Caco-2 (cell line): ENCODE measurements at regions of chr15 and their contacts with region 1.

Region 1: DNA sequence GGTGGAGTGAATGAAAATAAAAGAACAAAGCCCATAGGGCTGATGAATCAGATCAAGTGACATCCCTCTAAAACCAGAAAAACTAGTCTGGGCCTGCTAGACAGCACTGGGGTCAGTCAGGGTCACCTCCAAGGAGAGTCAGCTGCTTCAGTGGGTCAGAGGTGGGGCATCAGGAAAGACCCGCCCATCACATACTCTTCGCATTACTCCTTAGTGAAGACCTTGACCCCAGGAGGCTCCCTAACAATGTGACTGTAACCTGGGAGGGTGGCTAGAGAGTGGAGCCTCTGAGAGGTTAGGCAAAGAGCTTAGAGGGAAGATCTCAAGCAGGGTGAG is 12.9 kb downstream of the PPCDC start:
- DNase-seq: peak; percentile 93 to 96
- H3K4me3 ChIP-seq: no peak overlapping the region
- H3K4me3 Mint-ChIP-seq: peak overlapping the region; percentile 25
- H3K27ac Mint-ChIP-seq: peak overlapping the region; percentile 75
- H3K4me1 ChIP-seq: peaks cover 66% of the 10 kb centered on the region
- H3K4me1 Mint-ChIP-seq: peaks cover 50% of the 10 kb centered on the region
- H3K27me3 ChIP-seq: no peaks in the 10 kb centered on the region
- H3K27me3 Mint-ChIP-seq: no peaks in the 10 kb centered on the region
- CTCF ChIP-seq: no peak

Region 2: GRCh38 chr15:74511583-74511982 is 524.7 kb before region 1 on chr15:
- CTCF ChIA-PET with region 1: no interaction called
- POLR2A ChIA-PET with region 1: no interaction called
- intact Hi-C with region 1: no loop called
- DNase-seq: no peak
- H3K4me3 ChIP-seq: no peak overlapping the region
- H3K4me3 Mint-ChIP-seq: no peak overlapping the region
- H3K27ac Mint-ChIP-seq: no peak overlapping the region
- H3K4me1 ChIP-seq: no peaks in the 10 kb centered on the region
- H3K4me1 Mint-ChIP-seq: no peaks in the 10 kb centered on the region
- H3K27me3 ChIP-seq: no peaks in the 10 kb centered on the region
- H3K27me3 Mint-ChIP-seq: no peaks in the 10 kb centered on the region
- CTCF ChIP-seq: no peak

Region 3: GRCh38 chr15:74790073-74790916 is 246.0 kb before region 1 on chr15:
- CTCF ChIA-PET with region 1: no interaction called
- POLR2A ChIA-PET with region 1: no interaction called
- intact Hi-C with region 1: no loop called
- DNase-seq: no peak
- H3K4me3 ChIP-seq: no peak overlapping the region
- H3K4me3 Mint-ChIP-seq: no peak overlapping the region
- H3K27ac Mint-ChIP-seq: no peak overlapping the region
- H3K4me1 ChIP-seq: peaks cover 19% of the 10 kb centered on the region
- H3K4me1 Mint-ChIP-seq: peaks cover 13% of the 10 kb centered on the region
- H3K27me3 ChIP-seq: no peaks in the 10 kb centered on the region
- H3K27me3 Mint-ChIP-seq: no peaks in the 10 kb centered on the region
- CTCF ChIP-seq: no peak

Region 4: DNA sequence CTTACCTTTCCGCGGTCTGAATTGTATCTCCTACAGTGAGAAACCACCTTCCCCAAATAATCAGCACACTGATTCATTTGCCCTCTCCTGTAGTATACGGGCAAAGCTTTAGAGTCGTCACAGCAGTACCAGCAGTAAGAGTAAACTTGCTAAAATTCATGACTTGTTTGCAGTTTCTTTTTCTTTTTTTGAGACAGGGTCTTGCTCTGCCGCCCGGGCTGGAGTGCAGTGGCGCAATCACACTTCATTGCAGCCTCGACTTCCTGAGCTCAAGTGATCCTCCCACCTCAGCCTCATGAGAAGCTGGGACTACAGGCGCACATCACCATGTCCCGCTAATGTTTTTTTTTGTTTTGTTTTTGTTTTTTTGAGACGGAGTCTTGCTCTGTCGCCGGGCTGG is 29.1 kb before region 1 on chr15:
- CTCF ChIA-PET with region 1: no interaction called
- POLR2A ChIA-PET with region 1: no interaction called
- intact Hi-C with region 1: no loop called
- DNase-seq: no peak
- H3K4me3 ChIP-seq: no peak overlapping the region
- H3K4me3 Mint-ChIP-seq: no peak overlapping the region
- H3K27ac Mint-ChIP-seq: no peak overlapping the region
- H3K4me1 ChIP-seq: no peaks in the 10 kb centered on the region
- H3K4me1 Mint-ChIP-seq: no peaks in the 10 kb centered on the region
- H3K27me3 ChIP-seq: no peaks in the 10 kb centered on the region
- H3K27me3 Mint-ChIP-seq: no peaks in the 10 kb centered on the region
- CTCF ChIP-seq: no peak

Region 5: DNA sequence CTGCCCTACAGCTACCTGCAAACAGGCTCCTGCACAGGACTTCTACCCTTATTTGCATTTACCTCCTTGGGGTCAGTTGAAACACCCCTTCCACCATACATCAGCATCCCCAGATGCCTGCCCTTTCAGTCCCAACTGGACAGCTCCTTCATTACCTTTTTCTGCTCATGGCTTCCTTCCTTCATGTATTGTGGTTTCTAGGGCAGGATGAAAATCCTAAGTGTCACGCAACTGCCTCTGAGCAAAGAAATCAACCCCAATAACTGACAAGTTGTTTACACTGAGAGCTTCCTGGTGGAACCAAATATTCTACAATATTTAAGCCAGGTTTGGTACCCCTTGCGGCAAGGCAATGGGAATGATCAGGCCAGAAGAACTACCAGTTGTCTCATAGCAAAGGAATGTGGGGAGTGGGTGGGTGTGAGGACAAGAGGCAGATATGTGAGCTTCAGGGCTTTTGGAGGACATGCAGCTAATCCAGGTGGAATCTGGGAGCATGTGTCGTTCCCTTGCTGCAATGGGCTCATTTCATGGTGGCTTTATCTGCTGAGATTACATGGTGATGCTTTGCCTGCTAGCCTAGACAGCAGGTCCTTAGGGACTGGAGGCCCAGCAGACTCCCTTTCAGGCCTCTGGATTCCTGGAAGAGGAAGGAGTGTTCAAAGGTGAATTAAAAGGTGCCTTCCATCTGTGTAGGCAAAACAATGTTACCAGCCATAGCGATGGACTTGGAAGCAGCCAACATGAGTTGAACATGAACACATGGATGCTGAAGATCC is 22.0 kb after region 1 on chr15:
- CTCF ChIA-PET with region 1: interaction called, 4 read pairs
- POLR2A ChIA-PET with region 1: no interaction called
- intact Hi-C with region 1: loop called (anchors 2 kb)
- DNase-seq: peak; percentile 83 to 89
- H3K4me3 ChIP-seq: no peak overlapping the region
- H3K4me3 Mint-ChIP-seq: peak overlapping the region; percentile 5
- H3K27ac Mint-ChIP-seq: peak overlapping the region; percentile 87
- H3K4me1 ChIP-seq: peaks cover 49% of the 10 kb centered on the region
- H3K4me1 Mint-ChIP-seq: peaks cover 25% of the 10 kb centered on the region
- H3K27me3 ChIP-seq: no peaks in the 10 kb centered on the region
- H3K27me3 Mint-ChIP-seq: no peaks in the 10 kb centered on the region
- CTCF ChIP-seq: no peak

Region 6: DNA sequence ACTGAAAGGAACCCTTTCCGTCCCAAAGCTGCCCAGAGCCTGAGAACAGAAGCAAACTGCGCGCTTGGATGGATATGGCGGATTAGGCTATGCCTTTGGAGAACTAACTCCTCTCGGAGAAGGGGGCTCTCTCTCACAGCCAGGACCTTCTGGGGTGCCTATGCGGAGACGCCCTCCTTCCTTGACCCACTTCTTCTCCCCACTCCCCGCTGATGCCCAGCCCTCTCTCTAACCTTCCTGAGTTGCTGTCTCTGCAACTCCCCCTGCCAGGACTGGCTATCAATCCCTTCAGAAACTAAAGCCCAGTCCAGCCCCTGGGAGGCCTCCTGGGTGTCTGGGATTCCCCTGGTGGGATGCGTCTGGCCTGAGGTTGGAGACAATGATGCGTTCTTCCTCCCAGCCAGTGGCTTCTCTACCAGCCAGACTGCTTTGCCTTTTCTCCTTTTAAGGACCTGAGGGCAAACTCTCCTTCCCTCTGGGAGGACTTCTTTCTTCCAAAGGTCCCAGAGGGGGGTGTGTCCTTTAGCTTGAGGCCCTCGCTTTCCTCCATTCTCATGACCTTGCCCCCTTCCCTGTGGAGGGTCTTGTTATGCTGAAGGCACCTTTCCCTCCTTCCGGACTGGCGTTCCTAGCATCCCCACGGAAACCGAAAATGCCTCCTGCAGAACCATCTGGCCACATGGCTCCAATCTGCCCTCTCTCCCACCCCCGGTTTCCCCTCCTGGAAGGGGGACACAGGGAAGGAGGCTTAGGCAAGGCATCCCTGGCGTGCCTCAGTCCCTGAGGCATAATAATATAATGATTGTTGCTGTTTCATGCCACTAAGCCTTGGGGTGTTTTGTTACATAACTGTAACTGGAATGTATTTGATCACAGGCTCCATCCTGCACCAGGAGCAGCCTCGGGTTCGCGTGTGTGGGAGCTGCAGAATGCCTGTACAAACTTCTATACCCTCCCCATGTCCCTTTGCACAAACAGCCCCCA is 102.0 kb after region 1 on chr15:
- CTCF ChIA-PET with region 1: no interaction called
- POLR2A ChIA-PET with region 1: no interaction called
- intact Hi-C with region 1: loop called (anchors 2 kb)
- DNase-seq: peak; percentile 40 to 67
- H3K4me3 ChIP-seq: no peak overlapping the region
- H3K4me3 Mint-ChIP-seq: no peak overlapping the region
- H3K27ac Mint-ChIP-seq: peak overlapping the region; percentile 92
- H3K4me1 ChIP-seq: peaks cover 43% of the 10 kb centered on the region
- H3K4me1 Mint-ChIP-seq: peaks cover 30% of the 10 kb centered on the region
- H3K27me3 ChIP-seq: no peaks in the 10 kb centered on the region
- H3K27me3 Mint-ChIP-seq: no peaks in the 10 kb centered on the region
- CTCF ChIP-seq: no peak